CD8-positive, alpha-beta T cell (primary cell): ENCODE measurements at regions of chr6 and their contacts with region 1.

Region 1: DNA sequence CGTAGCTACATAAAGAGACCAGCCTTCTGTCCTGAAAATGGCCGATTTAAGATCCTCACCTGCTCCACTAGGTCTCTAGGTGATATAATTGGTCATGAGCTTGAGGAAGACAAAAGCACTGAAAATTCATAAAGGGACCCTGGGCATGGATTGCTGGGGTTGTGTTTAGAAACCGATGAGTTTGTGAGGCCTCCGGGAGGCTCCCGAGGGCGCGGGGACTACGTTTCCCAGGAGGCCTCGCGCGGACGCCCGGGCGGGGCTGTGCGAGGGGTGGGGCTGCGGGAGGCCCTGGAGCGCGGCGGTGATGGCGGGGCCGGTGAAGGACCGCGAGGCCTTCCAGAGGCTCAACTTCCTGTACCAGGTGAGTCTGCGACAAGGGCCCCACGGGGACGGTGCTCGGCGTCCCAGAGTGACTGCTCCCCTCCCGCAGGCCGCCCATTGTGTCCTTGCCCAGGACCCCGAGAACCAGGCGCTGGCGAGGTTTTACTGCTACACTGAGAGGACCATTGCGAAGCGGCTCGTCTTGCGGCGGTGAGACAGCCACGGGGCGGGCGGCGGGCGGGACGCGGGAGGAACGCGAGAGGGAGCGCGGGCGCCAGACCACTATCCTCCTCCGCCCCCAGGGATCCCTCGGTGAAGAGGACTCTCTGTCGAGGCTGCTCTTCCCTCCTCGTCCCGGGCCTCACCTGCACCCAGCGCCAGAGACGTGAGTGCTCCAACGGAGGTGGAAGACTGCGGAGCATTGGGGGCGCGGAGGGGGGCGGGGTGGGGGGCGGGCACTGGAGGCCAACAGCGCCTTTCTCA is at the start of gene RPP21:
- DNase-seq: peak; percentile 70 to 92 (median 85)
- ATAC-seq: peak; percentile 98
- H3K4me3 ChIP-seq: peak within 1 kb of the TSS; percentile 80 to 86
- H3K4me3 Mint-ChIP-seq: peak within 1 kb of the TSS; percentile 93
- H3K27ac ChIP-seq: peak within 1 kb of the TSS; percentile 85 to 86
- H3K27ac Mint-ChIP-seq: peak within 1 kb of the TSS; percentile 96
- H3K4me1 ChIP-seq: peaks cover 11% of the 10 kb centered on the region
- H3K4me1 Mint-ChIP-seq: peaks cover 23% of the 10 kb centered on the region
- H3K27me3 ChIP-seq: no peaks in the 10 kb centered on the region
- H3K27me3 Mint-ChIP-seq: no peaks in the 10 kb centered on the region
- CTCF ChIP-seq: no peak
- total RNA-seq, gene RPP21: 51.0 to 52.4 TPM

Region 2: DNA sequence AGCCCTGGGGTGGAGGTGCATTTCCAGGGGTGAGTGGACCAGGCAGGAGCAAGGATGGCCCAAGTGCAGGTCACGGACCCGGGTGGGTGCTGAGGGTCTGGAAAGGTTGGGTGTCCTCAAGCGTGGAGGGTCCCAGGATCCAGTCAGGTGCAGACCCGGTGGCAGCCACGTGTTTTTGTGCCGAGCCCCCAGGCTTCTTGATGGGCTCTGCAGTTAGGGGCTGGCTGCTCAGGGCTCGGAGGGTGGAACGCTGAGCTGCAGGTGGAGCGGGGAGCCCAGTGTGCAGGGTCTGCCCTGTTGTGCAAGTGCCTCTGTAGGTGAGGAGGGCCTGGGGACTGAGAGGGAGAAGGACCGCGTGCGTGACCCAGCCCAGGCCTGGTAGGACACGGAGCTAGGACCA is 73.4 kb after region 1 on chr6:
- CTCF ChIA-PET with region 1: no interaction called
- POLR2A ChIA-PET with region 1: no interaction called
- intact Hi-C with region 1: no loop called
- DNase-seq: no peak
- ATAC-seq: no peak
- H3K4me3 ChIP-seq: no peak overlapping the region
- H3K4me3 Mint-ChIP-seq: no peak overlapping the region
- H3K27ac ChIP-seq: no peak overlapping the region
- H3K27ac Mint-ChIP-seq: no peak overlapping the region
- H3K4me1 ChIP-seq: no peaks in the 10 kb centered on the region
- H3K4me1 Mint-ChIP-seq: no peaks in the 10 kb centered on the region
- H3K27me3 ChIP-seq: peaks cover 0 to 5% of the 10 kb centered on the region in 2 experiments
- H3K27me3 Mint-ChIP-seq: peaks cover 20% of the 10 kb centered on the region
- CTCF ChIP-seq: no peak

Region 3: GRCh38 chr6:30686908-30687658 is 342.0 kb after region 1 on chr6:
- CTCF ChIA-PET with region 1: no interaction called
- POLR2A ChIA-PET with region 1: no interaction called
- intact Hi-C with region 1: loop called in 1 of 2 experiments (anchors 1 kb)
- DNase-seq: peak in 8 of 9 experiments; percentile 47 to 79 (median 68)
- ATAC-seq: peak; percentile 21
- H3K4me3 ChIP-seq: peak overlapping the region; percentile 86 to 95
- H3K4me3 Mint-ChIP-seq: peak overlapping the region; percentile 99
- H3K27ac ChIP-seq: peak overlapping the region; percentile 75 to 94
- H3K27ac Mint-ChIP-seq: peak overlapping the region; percentile 95
- H3K4me1 ChIP-seq: peaks cover 31% of the 10 kb centered on the region
- H3K4me1 Mint-ChIP-seq: peaks cover 54% of the 10 kb centered on the region
- H3K27me3 ChIP-seq: no peaks in the 10 kb centered on the region
- H3K27me3 Mint-ChIP-seq: no peaks in the 10 kb centered on the region
- CTCF ChIP-seq: no peak